ENCODE measurements at regions of chr10 and their contacts with region 1.

Region 1: DNA sequence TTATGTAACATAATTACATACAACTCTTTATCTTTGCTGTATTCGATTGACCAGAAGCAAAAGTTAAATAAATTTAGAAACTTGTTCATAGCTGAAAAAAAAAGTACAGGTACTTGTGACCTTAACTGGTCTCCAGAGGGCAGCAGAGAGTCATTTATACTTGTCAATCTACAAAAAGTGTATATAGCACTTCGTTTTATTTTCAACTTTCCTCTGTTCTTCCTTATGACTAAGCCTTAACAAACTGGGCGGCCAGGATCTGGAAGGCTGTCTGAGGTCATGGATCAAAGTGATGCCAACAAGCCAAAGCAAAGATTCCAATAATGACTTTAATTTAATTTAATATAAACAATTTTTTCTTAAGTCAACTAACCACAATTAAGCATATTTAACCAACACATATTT is 29.8 kb downstream of the C10orf67 start:
- DNase-seq: peak in 7 of 9 experiments; percentile 26 to 78 (median 46)
- ATAC-seq: no peak
- H3K4me3 ChIP-seq: no peak overlapping the region
- H3K4me3 Mint-ChIP-seq: no peak overlapping the region
- H3K27ac ChIP-seq: no peak overlapping the region
- H3K27ac Mint-ChIP-seq: no peak overlapping the region
- H3K4me1 ChIP-seq: no peaks in the 10 kb centered on the region
- H3K4me1 Mint-ChIP-seq: no peaks in the 10 kb centered on the region
- H3K27me3 ChIP-seq: no peaks in the 10 kb centered on the region
- H3K27me3 Mint-ChIP-seq: peaks cover 3% of the 10 kb centered on the region
- CTCF ChIP-seq: peak; percentile 97

Region 2: DNA sequence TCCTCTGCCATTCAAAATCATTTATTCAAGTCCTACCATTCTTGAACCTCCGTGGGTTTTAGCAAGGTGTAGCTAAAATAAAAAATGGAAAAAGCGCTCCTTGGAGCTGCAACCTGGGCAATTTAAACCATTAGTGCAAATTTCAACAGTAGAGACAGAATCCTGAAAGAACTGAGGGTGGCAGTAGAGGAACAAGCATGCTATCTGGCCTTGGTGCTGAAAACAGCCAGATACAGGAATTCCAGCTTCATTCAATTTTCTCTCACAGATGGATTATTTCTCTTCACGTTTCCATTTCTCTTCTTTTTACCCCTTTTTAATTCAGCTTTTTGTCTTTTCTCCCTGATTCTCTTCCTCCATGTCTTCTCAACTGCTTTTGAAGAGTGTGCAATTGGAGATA is 201.7 kb after region 1 on chr10:
- CTCF ChIA-PET with region 1: interaction called, 38 read pairs
- POLR2A ChIA-PET with region 1: no interaction called
- intact Hi-C with region 1: no loop called
- DNase-seq: peak in 2 of 9 experiments; percentile 22 to 40
- ATAC-seq: no peak
- H3K4me3 ChIP-seq: no peak overlapping the region
- H3K4me3 Mint-ChIP-seq: no peak overlapping the region
- H3K27ac ChIP-seq: no peak overlapping the region
- H3K27ac Mint-ChIP-seq: no peak overlapping the region
- H3K4me1 ChIP-seq: no peaks in the 10 kb centered on the region
- H3K4me1 Mint-ChIP-seq: no peaks in the 10 kb centered on the region
- H3K27me3 ChIP-seq: no peaks in the 10 kb centered on the region
- H3K27me3 Mint-ChIP-seq: peaks cover 21% of the 10 kb centered on the region
- CTCF ChIP-seq: peak; percentile 40

Region 3: GRCh38 chr10:23535381-23535780 is 220.5 kb after region 1 on chr10:
- CTCF ChIA-PET with region 1: interaction called, 51 read pairs
- POLR2A ChIA-PET with region 1: interaction called, 3 read pairs
- intact Hi-C with region 1: loop called in 1 of 2 experiments (anchors 1 kb)
- DNase-seq: no peak
- ATAC-seq: no peak
- H3K4me3 ChIP-seq: no peak overlapping the region
- H3K4me3 Mint-ChIP-seq: no peak overlapping the region
- H3K27ac ChIP-seq: no peak overlapping the region
- H3K27ac Mint-ChIP-seq: peak overlapping the region; percentile 20
- H3K4me1 ChIP-seq: peaks cover 25% of the 10 kb centered on the region
- H3K4me1 Mint-ChIP-seq: peaks cover 46% of the 10 kb centered on the region
- H3K27me3 ChIP-seq: no peaks in the 10 kb centered on the region
- H3K27me3 Mint-ChIP-seq: no peaks in the 10 kb centered on the region
- CTCF ChIP-seq: no peak

Region 4: GRCh38 chr10:23702977-23703414 is 388.2 kb after region 1 on chr10:
- CTCF ChIA-PET with region 1: interaction called, 24 read pairs
- POLR2A ChIA-PET with region 1: no interaction called
- intact Hi-C with region 1: loop called (anchors 1 kb)
- DNase-seq: peak in 8 of 9 experiments; percentile 19 to 72 (median 51)
- ATAC-seq: peak; percentile 57
- H3K4me3 ChIP-seq: no peak overlapping the region
- H3K4me3 Mint-ChIP-seq: no peak overlapping the region
- H3K27ac ChIP-seq: no peak overlapping the region
- H3K27ac Mint-ChIP-seq: no peak overlapping the region
- H3K4me1 ChIP-seq: no peaks in the 10 kb centered on the region
- H3K4me1 Mint-ChIP-seq: peaks cover 6% of the 10 kb centered on the region
- H3K27me3 ChIP-seq: no peaks in the 10 kb centered on the region
- H3K27me3 Mint-ChIP-seq: peaks cover 16% of the 10 kb centered on the region
- CTCF ChIP-seq: peak; percentile 60

Region 5: GRCh38 chr10:24518981-24519597 is 1204.3 kb after region 1 on chr10:
- CTCF ChIA-PET with region 1: interaction called, 4 read pairs
- POLR2A ChIA-PET with region 1: no interaction called
- intact Hi-C with region 1: loop called (anchors 5 kb)
- DNase-seq: peak in 4 of 9 experiments; percentile 19 to 48 (median 28)
- ATAC-seq: no peak
- H3K4me3 ChIP-seq: no peak overlapping the region
- H3K4me3 Mint-ChIP-seq: peak overlapping the region; percentile 70
- H3K27ac ChIP-seq: no peak overlapping the region
- H3K27ac Mint-ChIP-seq: no peak overlapping the region
- H3K4me1 ChIP-seq: peaks cover 9% of the 10 kb centered on the region
- H3K4me1 Mint-ChIP-seq: peaks cover 13% of the 10 kb centered on the region
- H3K27me3 ChIP-seq: no peaks in the 10 kb centered on the region
- H3K27me3 Mint-ChIP-seq: no peaks in the 10 kb centered on the region
- CTCF ChIP-seq: peak; percentile 52

Measured in CD8-positive, alpha-beta T cell (primary cell).